IMR-90 (cell line): ENCODE measurements at regions of chr12 and their contacts with region 1.

Region 1: DNA sequence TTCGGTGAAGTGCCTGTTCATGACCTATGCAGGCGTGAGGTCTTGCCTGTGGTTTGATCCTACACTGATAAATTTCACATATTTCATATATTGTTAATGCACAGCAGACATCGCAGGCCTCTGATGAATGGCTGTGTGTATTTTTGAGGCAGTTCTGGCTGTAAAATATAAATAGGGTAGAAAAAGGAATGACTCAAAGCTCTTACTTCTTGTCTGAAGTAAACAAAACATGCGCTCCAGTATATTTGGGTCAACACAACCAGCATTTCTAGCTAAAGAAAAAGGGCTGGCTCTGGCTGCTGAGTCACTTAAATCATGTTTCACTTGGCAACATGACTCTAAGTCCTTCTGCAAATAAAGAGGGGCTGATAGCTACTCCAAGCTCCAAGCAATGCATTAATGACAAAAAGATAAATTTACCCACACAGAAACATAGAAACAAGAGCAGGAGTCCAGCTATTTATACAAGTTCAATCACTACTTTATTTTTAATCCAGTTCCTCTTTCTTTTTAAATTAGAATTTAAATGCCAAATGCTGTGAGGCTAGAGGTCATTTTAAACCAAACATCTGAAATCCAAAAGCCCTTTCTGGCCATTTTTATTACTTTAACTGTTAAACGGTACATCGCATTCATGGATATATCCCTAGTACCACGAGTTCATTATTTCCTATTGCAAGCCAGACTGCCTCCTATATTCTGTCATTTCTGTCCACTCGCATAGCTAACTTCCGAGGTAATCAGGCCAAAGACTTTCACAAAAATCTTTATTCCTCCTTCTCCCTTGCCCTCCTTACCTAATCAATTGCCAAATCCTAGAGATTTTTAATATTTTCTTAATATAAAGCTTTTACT is 54.3 kb upstream of the TMCC3 start:
- DNase-seq: peak; percentile 90
- ATAC-seq: peak; percentile 98
- H3K4me3 ChIP-seq: no peak overlapping the region
- H3K27ac ChIP-seq: no peak overlapping the region
- H3K4me1 ChIP-seq: peaks cover 2% of the 10 kb centered on the region
- H3K27me3 ChIP-seq: peaks cover 44% of the 10 kb centered on the region
- CTCF ChIP-seq: no peak
- POLR2A ChIP-seq: no peak
- RAD21 ChIP-seq: no peak

Region 2: GRCh38 chr12:93868771-93869170 is 835.9 kb before region 1 on chr12:
- CTCF ChIA-PET with region 1: no interaction called
- POLR2A ChIA-PET with region 1: no interaction called
- dilution Hi-C with region 1: no loop called
- in situ Hi-C with region 1: no loop called
- intact Hi-C with region 1: no loop called
- DNase-seq: peak; percentile 52
- ATAC-seq: peak; percentile 17; the same call in 1 of the 2 replicates
- H3K4me3 ChIP-seq: no peak overlapping the region
- H3K27ac ChIP-seq: no peak overlapping the region
- H3K4me1 ChIP-seq: 0 out of 2 replicates have a peak, but pooled peaks cover 2% of the 10 kb centered on the region
- H3K27me3 ChIP-seq: no peaks in the 10 kb centered on the region
- CTCF ChIP-seq: no peak
- POLR2A ChIP-seq: no peak
- RAD21 ChIP-seq: no peak

Region 3: DNA sequence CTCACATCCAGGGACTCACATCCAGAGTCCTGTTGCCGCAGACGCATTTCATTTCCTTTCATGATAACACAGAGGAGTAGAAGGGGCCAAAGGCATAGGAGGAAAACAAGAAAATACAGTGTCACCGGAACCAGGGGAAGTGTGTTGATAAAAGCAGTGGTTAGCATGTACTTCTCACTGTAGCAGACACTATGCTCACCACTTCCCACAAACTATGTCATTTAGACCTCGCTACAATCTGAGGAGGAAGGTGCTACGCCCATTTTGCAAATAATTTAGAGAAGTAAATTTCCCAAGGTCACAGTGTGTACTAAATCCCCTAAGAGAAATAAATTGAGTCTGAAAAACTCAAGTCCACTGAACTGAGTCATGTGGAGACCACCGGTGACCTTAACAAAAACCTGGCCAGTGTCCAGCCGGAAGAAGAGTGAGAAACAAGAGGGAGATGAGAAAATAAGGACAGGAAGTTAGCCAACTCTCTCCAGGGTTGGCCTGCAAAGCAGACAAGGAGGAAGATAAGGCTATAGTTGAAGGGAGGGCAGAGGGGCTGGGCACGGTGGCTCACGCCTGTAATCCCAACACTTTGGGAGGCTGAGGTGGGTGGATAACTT is 28.5 kb before region 1 on chr12:
- CTCF ChIA-PET with region 1: no interaction called
- POLR2A ChIA-PET with region 1: no interaction called
- dilution Hi-C with region 1: no loop called
- in situ Hi-C with region 1: no loop called
- intact Hi-C with region 1: no loop called
- DNase-seq: no peak
- ATAC-seq: no peak
- H3K4me3 ChIP-seq: no peak overlapping the region
- H3K27ac ChIP-seq: no peak overlapping the region
- H3K4me1 ChIP-seq: no peaks in the 10 kb centered on the region
- H3K27me3 ChIP-seq: peaks cover 3% of the 10 kb centered on the region
- CTCF ChIP-seq: no peak
- POLR2A ChIP-seq: no peak
- RAD21 ChIP-seq: no peak

Region 4: GRCh38 chr12:95072900-95073697 is 368.4 kb after region 1 on chr12 and contains the start of gene NR2C1:
- CTCF ChIA-PET with region 1: no interaction called
- POLR2A ChIA-PET with region 1: no interaction called
- dilution Hi-C with region 1: no loop called
- in situ Hi-C with region 1: no loop called
- intact Hi-C with region 1: loop called (anchors 10 kb)
- DNase-seq: peak; percentile 92
- ATAC-seq: peak; percentile 95
- H3K4me3 ChIP-seq: peak within 1 kb of the TSS; percentile 98
- H3K27ac ChIP-seq: peak within 1 kb of the TSS; percentile 97
- H3K4me1 ChIP-seq: no peaks in the 10 kb centered on the region
- H3K27me3 ChIP-seq: no peaks in the 10 kb centered on the region
- CTCF ChIP-seq: no peak; the same call in 1 of the 2 replicates
- POLR2A ChIP-seq: peak; percentile 39; the same call in 1 of the 2 replicates
- RAD21 ChIP-seq: no peak; the same call in 1 of the 2 replicates
- total RNA-seq, gene NR2C1: 12.7 and 17.2 TPM in 2 replicates